A549 (cell line): ENCODE measurements at regions of chr12 and their contacts with region 1.

Region 1: DNA sequence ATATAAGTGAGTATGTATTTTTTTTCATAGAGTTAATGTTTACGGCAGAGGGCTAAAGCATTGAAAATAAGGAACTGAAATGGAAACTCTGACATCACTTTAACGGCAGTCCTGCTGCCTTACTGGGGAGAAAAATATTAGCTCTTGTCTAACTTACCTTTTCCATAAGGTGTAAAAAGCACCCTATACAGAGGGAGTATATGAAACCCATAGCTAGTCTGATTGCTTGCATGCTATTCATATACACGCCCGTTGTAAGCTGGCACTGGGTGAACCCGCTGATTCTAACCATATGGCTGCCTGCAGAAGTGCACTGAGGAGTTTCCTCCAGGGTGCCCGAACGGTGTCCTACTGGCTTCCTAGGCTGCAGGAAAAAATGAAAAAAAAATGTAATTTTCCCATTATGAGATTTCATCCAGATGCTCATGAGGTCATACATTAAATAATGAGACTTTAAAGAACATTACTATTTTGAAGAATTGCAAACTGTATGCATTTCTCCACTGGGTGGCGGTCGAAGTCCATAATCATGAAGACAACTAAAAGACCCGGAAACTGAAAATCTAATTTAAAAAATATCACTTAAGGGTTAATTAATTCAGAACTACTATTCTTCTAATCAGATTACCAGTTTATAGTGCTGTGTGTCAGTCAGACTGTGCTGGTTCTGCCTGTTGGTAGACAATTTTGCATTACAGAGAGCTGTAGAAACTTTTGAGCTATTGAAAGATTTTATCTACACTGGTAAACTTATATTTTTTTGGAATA is 144.7 kb downstream of the ALX1 start:
- DNase-seq: peak in 1 of 2 experiments; percentile 64
- ATAC-seq: peak; percentile 68 to 81; a peak in 3 of 6 replicates
- H3K4me3 ChIP-seq: no peak overlapping the region
- H3K27ac ChIP-seq: 0 out of 6 replicates have a peak overlapping the region, but pooled peaks of 1 of the 2 experiments have one; percentile 57
- H3K4me1 ChIP-seq: no peaks in the 10 kb centered on the region
- CTCF ChIP-seq: peak; percentile 83
- EP300 ChIP-seq: no peak
- POLR2A ChIP-seq: no peak
- RAD21 ChIP-seq: peak; percentile 77 to 79

Region 2: GRCh38 chr12:85405781-85406522 is 18.8 kb before region 1 on chr12:
- CTCF ChIA-PET with region 1: interaction called, 10 read pairs
- POLR2A ChIA-PET with region 1: no interaction called
- DNase-seq: no peak
- ATAC-seq: no peak
- H3K4me3 ChIP-seq: no peak overlapping the region
- H3K27ac ChIP-seq: no peak overlapping the region
- H3K4me1 ChIP-seq: no peaks in the 10 kb centered on the region
- CTCF ChIP-seq: no peak
- EP300 ChIP-seq: no peak
- POLR2A ChIP-seq: no peak
- RAD21 ChIP-seq: no peak

Region 3: DNA sequence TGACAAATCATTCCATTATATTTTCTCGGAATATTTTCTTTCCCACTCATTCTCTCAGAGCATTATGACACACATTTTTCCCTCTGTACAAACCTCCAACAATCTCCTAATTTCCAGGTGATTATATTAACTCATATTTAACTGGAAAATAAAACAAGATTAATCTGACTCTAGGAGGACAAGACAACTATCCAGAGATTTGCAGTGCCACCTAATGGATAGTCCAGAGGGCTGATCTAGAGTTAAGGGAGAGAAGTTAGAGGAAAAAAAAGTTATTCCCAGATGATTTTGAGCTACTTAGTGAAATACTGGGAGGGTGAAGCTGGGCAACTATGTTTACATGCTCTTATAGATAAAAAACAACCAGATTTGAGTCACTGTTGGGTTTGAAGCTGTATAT is 17.0 kb after region 1 on chr12:
- CTCF ChIA-PET with region 1: interaction called, 20 read pairs
- POLR2A ChIA-PET with region 1: no interaction called
- DNase-seq: peak; percentile 10 to 49
- ATAC-seq: peak in 1 of 2 experiments; percentile 70; a peak in 3 of 6 replicates
- H3K4me3 ChIP-seq: no peak overlapping the region
- H3K27ac ChIP-seq: no peak overlapping the region
- H3K4me1 ChIP-seq: peaks cover 15% of the 10 kb centered on the region; the same call in 1 of the 3 replicates
- CTCF ChIP-seq: peak; percentile 46
- EP300 ChIP-seq: no peak
- POLR2A ChIP-seq: no peak
- RAD21 ChIP-seq: peak; percentile 41 to 45

Region 4: DNA sequence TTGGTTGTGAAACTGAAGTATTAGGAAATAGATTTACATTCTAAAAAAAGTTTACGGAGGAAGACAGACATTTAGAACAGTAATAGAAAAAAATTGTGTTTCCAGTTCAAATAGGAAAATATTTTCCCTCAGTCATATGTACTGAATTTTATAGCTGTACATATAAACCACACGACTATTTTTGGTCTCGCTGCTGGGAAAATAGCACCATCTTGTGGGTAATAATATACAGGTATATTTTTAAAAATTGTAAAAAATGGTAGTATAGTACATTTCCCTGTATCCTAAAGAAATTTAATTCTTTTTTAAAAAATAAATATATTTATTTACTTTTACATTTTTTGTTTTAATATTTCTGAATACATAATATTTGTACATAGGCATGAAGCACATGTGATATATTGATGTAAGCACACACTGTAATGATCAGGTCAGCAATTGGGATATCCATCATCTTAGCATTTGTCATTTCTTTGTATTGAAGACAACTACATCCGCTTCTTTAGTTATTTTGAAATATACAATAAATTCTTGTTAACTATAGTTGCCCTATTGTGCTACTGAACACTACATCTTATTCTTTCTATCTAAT is 23.9 kb after region 1 on chr12:
- CTCF ChIA-PET with region 1: interaction called, 22 read pairs
- POLR2A ChIA-PET with region 1: no interaction called
- DNase-seq: peak in 1 of 2 experiments; percentile 25
- ATAC-seq: peak in 1 of 2 experiments; percentile 39; a peak in 1 of 6 replicates
- H3K4me3 ChIP-seq: no peak overlapping the region
- H3K27ac ChIP-seq: no peak overlapping the region
- H3K4me1 ChIP-seq: peaks cover 15% of the 10 kb centered on the region; the same call in 1 of the 3 replicates
- CTCF ChIP-seq: peak; percentile 75
- EP300 ChIP-seq: no peak
- POLR2A ChIP-seq: no peak
- RAD21 ChIP-seq: peak; percentile 67 to 72; a peak in 4 of 5 replicates

Region 5: GRCh38 chr12:85476756-85477155 is 52.0 kb after region 1 on chr12:
- CTCF ChIA-PET with region 1: no interaction called
- POLR2A ChIA-PET with region 1: no interaction called
- DNase-seq: no peak
- ATAC-seq: no peak
- H3K4me3 ChIP-seq: no peak overlapping the region
- H3K27ac ChIP-seq: no peak overlapping the region
- H3K4me1 ChIP-seq: no peaks in the 10 kb centered on the region
- CTCF ChIP-seq: no peak
- EP300 ChIP-seq: no peak
- POLR2A ChIP-seq: no peak
- RAD21 ChIP-seq: no peak